GM12878 (cell line): ENCODE measurements at regions of chr9 and their contacts with region 1.

Region 1: DNA sequence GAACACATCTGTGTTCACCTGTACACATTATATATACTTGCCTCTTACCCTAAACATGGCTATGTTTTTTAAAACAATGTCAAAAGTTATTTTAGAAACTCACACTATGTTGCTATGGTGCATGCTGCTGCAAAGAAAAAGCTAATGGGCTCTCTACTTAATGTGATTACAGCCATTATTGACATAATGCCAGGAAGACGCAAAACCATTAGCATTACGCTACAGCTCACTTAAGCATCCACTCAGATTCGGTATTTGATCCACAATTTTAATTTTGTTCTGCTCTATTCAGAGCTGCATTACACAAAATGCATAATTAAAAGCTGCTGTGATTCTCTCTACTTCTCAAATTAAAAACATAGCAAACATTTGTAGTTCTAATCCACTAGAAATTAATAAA is 395.2 kb downstream of the BNC2 start:
- DNase-seq: no peak
- ATAC-seq: no peak
- H3K4me3 ChIP-seq: no peak overlapping the region
- H3K27ac ChIP-seq: no peak overlapping the region
- H3K4me1 ChIP-seq: no peaks in the 10 kb centered on the region
- H3K27me3 ChIP-seq: no peaks in the 10 kb centered on the region
- CTCF ChIP-seq: no peak
- EP300 ChIP-seq: no peak
- POLR2A ChIP-seq: no peak
- RAD21 ChIP-seq: no peak

Region 2: GRCh38 chr9:16450578-16450977 is 24.7 kb before region 1 on chr9:
- CTCF ChIA-PET with region 1: interaction called, 3 read pairs
- POLR2A ChIA-PET with region 1: no interaction called
- RAD21 ChIA-PET with region 1: interaction called, 5 read pairs
- SMC1A ChIA-PET with region 1: interaction called, 13 read pairs
- in situ Hi-C with region 1: no loop called
- intact Hi-C with region 1: no loop called
- DNase-seq: no peak
- ATAC-seq: peak; percentile 74
- H3K4me3 ChIP-seq: no peak overlapping the region
- H3K27ac ChIP-seq: no peak overlapping the region
- H3K4me1 ChIP-seq: no peaks in the 10 kb centered on the region
- H3K27me3 ChIP-seq: no peaks in the 10 kb centered on the region
- CTCF ChIP-seq: no peak
- EP300 ChIP-seq: no peak
- POLR2A ChIP-seq: no peak
- RAD21 ChIP-seq: no peak

Region 3: GRCh38 chr9:16458696-16459420 is 16.4 kb before region 1 on chr9:
- CTCF ChIA-PET with region 1: interaction called, 9 read pairs
- POLR2A ChIA-PET with region 1: interaction called, 5 read pairs
- RAD21 ChIA-PET with region 1: interaction called, 18 read pairs
- SMC1A ChIA-PET with region 1: interaction called, 12 read pairs
- in situ Hi-C with region 1: no loop called
- intact Hi-C with region 1: no loop called
- DNase-seq: peak; percentile 76
- ATAC-seq: peak; percentile 80
- H3K4me3 ChIP-seq: no peak overlapping the region
- H3K27ac ChIP-seq: peak overlapping the region; percentile 29
- H3K4me1 ChIP-seq: peaks cover 8% of the 10 kb centered on the region; the same call in 1 of the 2 replicates
- H3K27me3 ChIP-seq: no peaks in the 10 kb centered on the region
- CTCF ChIP-seq: no peak
- EP300 ChIP-seq: no peak; a peak in 2 of 4 replicates
- POLR2A ChIP-seq: no peak
- RAD21 ChIP-seq: no peak